AG04450 (cell line): ENCODE measurements at regions of chr12 and their contacts with region 1.

Region 1: DNA sequence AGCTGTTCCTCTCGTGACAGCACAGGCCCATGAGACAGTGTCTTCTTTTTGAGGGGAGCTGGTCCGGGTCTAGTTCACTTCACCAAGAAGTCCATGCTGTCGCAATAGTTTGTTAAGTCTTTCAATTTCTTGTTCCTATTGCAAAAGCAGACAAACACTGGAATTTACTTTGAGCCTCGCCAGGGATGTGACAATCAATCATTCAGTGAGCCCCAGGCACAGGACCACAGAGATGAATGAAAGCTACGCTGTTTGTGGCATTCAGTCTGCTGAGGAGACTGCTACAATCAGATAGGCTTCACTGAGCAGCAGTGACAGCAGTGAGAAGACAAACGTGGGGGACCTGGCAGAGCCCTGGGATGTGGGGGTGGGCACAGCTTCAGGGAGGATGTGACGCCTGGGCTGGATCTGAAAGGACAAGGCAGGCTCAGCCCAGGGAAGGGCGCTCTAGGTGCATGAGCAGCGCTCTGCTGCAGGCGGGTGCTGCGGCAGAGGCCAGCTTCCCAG is 35.5 kb downstream of the TCTN1 start:
- DNase-seq: no peak
- H3K4me3 ChIP-seq: no peak overlapping the region
- H3K27ac ChIP-seq: no peak overlapping the region
- H3K27me3 ChIP-seq: no peaks in the 10 kb centered on the region
- CTCF ChIP-seq: no peak

Region 2: DNA sequence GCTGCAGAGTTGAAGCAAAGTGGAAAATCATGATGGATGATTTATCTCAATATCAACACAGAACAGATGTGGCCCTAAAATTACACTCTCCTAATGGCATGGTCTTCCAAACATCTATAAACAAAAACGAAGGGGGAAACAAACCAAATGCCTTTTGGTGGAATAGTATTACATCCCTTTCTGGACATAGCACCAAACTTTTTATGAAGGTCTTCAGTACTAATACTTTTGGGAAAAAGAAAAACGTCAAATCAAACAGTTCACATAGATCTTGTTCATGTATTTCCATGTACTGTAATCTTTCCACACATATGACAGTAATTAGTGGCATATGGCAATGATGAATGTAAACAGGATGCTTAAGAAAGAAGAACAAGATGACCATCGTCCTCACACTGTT is 223.0 kb before region 1 on chr12:
- CTCF ChIA-PET with region 1: no interaction called
- POLR2A ChIA-PET with region 1: no interaction called
- DNase-seq: no peak
- H3K4me3 ChIP-seq: no peak overlapping the region
- H3K27ac ChIP-seq: no peak overlapping the region
- H3K27me3 ChIP-seq: no peaks in the 10 kb centered on the region
- CTCF ChIP-seq: no peak

Region 3: DNA sequence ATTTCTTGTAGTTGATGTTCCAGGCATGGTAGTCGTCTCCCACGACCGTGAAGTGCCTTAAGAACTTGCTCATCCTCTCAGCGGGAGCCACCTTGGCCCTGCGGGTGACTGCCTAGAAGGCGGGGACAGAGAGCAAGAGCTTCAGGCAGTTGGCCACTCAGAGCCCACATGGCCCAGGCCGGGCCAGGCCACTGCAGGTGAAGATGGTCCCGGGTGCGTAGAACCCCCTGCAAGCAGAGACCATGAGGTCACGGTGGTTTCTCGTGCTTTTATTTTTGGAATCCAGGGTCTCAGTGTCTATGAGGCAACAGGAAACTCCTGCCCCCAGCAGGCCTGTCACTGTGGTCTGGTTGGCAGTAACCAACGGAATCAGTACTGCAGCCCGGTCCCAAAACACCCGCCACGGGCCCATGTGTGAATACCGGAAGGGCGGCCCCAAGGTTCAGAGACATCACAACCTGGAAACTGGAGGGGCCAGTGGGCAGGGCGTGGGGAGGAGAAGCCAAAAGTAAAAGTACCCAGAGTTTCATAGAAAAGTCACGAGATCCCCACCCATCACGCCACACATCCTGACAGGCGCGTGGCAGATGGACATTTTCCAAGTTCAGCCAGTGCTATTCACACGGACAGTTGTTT is 12.1 kb after region 1 on chr12:
- CTCF ChIA-PET with region 1: no interaction called
- POLR2A ChIA-PET with region 1: interaction called, 11 read pairs
- DNase-seq: no peak
- H3K4me3 ChIP-seq: no peak overlapping the region
- H3K27ac ChIP-seq: no peak overlapping the region
- H3K27me3 ChIP-seq: no peaks in the 10 kb centered on the region
- CTCF ChIP-seq: no peak